AG04449 (cell line): ENCODE measurements at regions of chr6 and their contacts with region 1.

Region 1: DNA sequence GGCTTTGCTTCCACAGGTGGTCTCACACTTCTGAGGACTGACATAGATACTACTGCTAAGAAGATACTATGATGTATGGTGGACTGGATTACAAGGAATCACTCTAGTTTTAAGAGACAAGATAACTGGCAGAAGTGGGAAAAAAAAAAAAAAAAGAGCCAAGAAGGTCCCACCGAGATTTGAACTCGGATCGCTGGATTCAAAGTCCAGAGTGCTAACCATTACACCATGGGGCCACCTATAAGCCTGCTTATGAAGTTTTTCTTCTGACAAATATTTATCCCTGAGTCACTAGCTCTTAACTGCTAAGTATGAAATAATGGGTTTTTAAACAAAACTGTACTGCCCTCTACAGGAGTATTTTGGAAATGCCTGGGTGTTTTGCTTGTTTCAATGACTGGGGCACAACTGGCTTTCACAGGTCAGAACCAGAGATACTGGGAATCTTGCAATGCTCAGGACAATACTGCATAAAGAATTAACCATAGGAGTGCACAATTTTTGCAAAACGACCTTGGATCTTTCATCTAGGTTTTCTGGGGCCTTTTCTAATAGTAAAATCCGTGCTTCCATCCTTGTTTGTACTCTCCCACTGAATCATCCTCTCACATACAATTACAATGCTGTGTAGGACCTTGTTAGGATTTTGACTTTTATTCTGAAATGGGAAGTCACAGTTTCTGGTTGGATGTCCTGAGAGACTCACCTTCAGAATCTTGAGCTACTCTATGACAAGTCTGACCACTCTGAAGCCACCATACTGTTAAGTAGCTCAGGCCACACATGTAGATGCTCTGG is 116.3 kb downstream of the OR2B2 start:
- DNase-seq: peak; percentile 63
- H3K4me3 ChIP-seq: no peak overlapping the region
- CTCF ChIP-seq: peak; percentile 44

Region 2: DNA sequence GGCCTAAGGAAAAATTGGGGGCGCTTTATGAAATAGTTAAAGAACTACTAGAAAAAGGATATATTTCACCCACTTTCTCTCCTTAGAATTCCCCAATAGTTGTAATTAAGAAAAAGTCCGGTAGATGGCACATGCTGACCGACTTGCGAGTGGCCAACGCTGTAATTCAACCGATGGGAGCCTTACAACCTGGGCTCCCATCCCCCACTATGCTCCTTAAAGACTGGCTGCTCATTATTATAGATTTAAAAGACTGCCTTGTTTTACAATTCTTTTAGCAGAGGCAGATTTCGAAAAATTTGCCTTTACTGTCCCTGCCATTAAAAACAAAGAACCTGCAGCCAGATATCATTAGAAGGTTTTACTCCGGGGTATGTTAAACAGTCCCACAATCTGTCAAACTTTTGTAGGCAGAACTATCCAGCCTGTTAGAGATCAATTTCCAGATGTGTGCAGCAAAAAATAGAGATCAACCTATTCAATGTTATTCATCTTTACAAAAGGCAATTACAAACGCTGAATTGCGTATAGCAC is 606.9 kb before region 1 on chr6:
- CTCF ChIA-PET with region 1: interaction called, 17 read pairs
- POLR2A ChIA-PET with region 1: no interaction called
- DNase-seq: peak; percentile 24
- H3K4me3 ChIP-seq: peak overlapping the region; percentile 75
- CTCF ChIP-seq: peak; percentile 51

Region 3: DNA sequence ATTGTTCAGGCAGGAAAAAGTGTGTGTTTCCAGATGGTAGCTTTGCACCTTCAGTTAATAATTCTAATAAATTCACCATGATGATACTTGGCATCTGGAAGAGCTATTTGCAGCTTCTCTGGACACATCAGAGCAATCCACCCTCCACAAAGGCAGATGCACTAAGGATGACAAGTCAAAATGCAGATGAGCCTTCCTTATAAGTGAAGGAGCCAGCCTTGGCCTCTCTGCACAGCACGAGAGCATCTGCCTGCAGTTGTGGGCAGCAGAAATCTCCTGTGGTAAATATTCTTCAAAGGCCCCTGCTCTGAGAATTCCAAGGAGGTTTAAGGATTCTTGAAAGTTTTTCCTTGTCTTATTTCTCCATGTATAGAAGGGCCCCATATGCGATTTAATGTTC is 476.9 kb before region 1 on chr6:
- CTCF ChIA-PET with region 1: no interaction called
- POLR2A ChIA-PET with region 1: no interaction called
- DNase-seq: no peak
- H3K4me3 ChIP-seq: no peak overlapping the region
- CTCF ChIP-seq: no peak

Region 4: GRCh38 chr6:27753668-27754407 is 42.1 kb before region 1 on chr6:
- CTCF ChIA-PET with region 1: interaction called, 10 read pairs
- POLR2A ChIA-PET with region 1: no interaction called
- DNase-seq: no peak
- H3K4me3 ChIP-seq: peak overlapping the region; percentile 56
- CTCF ChIP-seq: peak; percentile 23

Region 5: DNA sequence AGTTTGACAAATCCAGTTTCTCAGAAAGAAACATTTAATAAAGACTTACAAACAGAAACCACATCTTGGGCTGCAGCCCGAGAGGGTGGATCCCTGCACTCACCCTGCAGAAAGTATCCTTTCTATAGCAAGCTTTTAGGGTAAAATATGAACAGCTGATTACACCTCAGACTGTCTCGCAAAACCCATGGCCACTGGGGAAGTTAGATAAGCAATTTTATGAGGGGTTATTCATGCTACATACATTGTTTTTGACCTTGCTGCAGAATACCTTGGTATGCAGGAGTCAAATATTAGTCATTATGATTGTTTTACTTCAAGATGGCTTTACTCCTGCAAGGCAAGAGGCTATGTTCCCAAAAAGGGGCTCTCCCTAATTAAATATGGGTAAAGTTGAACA is 10.6 kb before region 1 on chr6:
- CTCF ChIA-PET with region 1: interaction called, 26 read pairs
- POLR2A ChIA-PET with region 1: no interaction called
- DNase-seq: no peak
- H3K4me3 ChIP-seq: no peak overlapping the region
- CTCF ChIP-seq: no peak